IMR-90 (cell line): ENCODE measurements at regions of chr3 and their contacts with region 1.

Region 1: GRCh38 chr3:168443967-168444366 is 348.2 kb upstream of the GOLIM4 start:
- DNase-seq: no peak
- ATAC-seq: no peak
- H3K4me3 ChIP-seq: no peak overlapping the region
- H3K27ac ChIP-seq: no peak overlapping the region
- H3K4me1 ChIP-seq: no peaks in the 10 kb centered on the region
- H3K27me3 ChIP-seq: no peaks in the 10 kb centered on the region
- CTCF ChIP-seq: no peak
- POLR2A ChIP-seq: no peak
- RAD21 ChIP-seq: no peak

Region 2: DNA sequence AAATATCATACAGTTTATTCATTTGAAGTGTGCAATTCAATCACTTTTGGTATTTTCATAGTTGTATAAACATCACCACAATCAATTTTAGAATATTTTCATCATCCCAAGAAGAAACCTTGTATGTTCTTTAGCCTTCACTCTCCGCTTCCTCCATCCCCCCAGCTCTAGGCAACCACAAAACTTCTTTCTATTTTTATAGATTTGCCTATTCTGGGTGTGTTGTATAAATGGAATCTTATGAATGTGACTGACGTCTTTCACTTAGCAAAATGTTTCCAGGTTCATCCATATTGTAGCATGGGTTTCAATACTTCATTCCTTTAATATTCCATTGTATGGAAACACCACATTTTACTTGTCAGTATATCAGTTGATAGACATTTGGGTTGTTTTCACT is 12.5 kb before region 1 on chr3:
- CTCF ChIA-PET with region 1: interaction called, 3 read pairs
- POLR2A ChIA-PET with region 1: no interaction called
- dilution Hi-C with region 1: no loop called
- in situ Hi-C with region 1: no loop called
- intact Hi-C with region 1: loop called (anchors 1 kb)
- DNase-seq: no peak
- ATAC-seq: no peak
- H3K4me3 ChIP-seq: no peak overlapping the region
- H3K27ac ChIP-seq: no peak overlapping the region
- H3K4me1 ChIP-seq: no peaks in the 10 kb centered on the region
- H3K27me3 ChIP-seq: peaks cover 3% of the 10 kb centered on the region
- CTCF ChIP-seq: no peak
- POLR2A ChIP-seq: no peak
- RAD21 ChIP-seq: no peak